ENCODE measurements at regions of chr7 and their contacts with region 1.

Region 1: GRCh38 chr7:101815835-101816493 is 1.5 kb upstream of the CUX1 start:
- DNase-seq: peak; percentile 71
- H3K4me3 Mint-ChIP-seq: peak overlapping the region; percentile 70
- H3K27ac Mint-ChIP-seq: peak overlapping the region; percentile 69
- H3K4me1 Mint-ChIP-seq: peaks cover 16% of the 10 kb centered on the region
- H3K27me3 Mint-ChIP-seq: no peaks in the 10 kb centered on the region

Region 2: DNA sequence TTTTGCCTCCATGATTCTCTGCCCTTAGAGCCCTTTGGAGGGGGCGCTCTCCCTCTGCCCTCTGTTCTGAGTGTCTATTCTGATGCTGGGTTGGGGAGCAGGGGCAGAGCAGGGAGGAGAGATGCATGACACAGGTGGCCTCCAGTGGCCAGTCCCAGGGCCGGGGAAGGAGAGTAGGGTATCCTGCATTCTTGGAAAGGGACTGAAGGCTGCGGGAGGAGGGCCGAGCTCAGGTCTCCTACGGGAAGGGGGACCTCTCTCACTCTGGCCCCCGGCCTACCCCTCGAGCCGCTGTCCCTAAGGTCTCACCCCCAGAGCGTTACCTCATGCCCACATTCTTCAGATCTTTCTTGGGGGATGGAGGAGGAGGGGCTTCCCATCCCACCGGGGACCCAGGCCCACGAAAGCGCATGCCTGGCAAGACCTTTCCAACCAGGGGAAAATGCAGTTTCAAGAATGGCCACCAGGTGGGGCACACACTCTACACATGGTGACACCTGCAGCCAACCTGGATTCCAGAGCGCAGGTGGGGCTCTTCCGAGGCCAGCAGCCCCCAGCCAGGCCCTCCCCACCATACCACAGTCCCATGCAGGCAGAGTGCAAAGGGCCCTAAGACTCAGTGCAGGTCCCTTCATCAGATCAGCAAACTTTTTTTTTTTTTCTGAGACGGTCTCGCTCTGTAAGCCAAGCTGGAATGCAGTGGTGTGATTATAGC is 273.3 kb before region 1 on chr7:
- CTCF ChIA-PET with region 1: no interaction called
- intact Hi-C with region 1: loop called (anchors 2 kb)
- DNase-seq: peak; percentile 89
- H3K4me3 Mint-ChIP-seq: no peak overlapping the region
- H3K27ac Mint-ChIP-seq: no peak overlapping the region
- H3K4me1 Mint-ChIP-seq: peaks cover 1% of the 10 kb centered on the region
- H3K27me3 Mint-ChIP-seq: no peaks in the 10 kb centered on the region

Region 3: DNA sequence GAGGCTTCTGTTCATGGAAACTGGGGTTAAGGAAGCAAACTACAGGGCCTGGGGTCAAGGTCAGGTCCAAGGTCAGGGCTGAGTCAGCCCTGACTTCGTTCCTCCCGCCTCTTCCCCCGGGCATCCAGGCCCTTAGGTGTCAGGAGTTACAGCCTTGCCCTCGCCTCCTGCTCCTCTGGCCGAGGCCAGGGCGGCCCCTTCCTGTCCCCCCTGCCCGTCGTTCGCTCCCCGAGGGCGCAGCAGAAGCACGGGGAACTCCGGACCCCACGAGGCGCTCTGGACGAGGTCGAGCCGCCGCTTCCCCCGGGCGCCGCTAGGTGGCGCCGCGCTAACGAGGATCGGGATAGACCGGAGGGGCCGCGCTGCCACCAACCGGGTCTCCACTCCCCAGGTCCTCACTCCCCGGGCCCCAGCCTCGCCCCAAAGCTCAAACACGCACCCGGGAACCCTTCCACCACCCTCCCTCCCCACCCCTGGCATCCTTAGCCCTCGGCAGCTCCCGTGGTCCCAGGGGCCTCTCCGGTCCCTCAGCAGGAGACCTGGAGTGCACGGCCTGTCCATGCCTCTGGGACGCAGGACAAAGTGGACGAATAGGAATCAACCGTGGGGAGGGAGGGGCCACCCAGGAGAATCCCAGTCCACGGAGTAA is 127.7 kb before region 1 on chr7:
- CTCF ChIA-PET with region 1: interaction called, 6 read pairs
- intact Hi-C with region 1: loop called (anchors 1 kb)
- DNase-seq: peak; percentile 84
- H3K4me3 Mint-ChIP-seq: no peak overlapping the region
- H3K27ac Mint-ChIP-seq: no peak overlapping the region
- H3K4me1 Mint-ChIP-seq: no peaks in the 10 kb centered on the region
- H3K27me3 Mint-ChIP-seq: no peaks in the 10 kb centered on the region

Region 4: DNA sequence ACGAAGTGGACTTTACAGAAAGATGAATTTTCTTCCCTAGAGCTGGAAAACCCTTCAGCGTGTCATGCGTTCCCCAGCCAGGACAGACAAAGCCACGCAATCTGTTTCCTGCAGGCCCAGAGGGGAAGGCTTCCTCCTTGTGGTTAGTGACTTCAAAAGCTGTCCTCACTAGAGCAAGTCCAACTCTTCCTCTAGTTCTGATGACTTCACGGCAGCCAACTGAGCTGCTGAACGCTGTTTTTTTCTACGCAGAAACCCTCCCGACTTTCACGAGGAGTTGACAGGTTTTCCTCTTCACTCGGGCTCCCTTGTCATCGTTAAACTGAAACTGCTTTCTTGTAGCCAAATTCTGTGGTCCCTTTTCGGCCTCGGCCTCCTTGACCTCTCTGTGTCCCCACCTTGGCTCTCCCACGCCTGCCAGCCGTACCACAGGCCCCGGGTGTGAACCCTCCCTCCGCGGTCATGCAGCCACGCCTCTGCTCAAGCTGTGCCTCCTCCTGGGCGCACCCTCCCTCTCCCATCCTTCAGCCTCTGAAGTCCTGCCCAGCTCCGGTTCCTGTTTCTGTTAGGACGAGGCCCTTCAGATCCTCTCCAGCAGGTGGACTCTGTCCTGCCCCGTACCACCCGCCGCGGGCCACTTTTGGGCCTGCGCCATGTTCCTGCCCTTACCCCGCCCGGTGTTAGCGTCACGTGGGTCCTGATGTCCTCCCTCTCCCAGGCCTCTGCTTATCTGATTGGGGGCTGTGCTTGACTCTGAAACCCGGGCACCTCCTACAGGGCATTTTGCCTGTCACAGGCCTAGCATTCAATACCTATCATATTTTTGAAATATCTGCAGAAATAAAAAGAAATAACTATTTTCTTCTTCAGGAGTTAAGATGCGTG is 40.8 kb after region 1 on chr7:
- CTCF ChIA-PET with region 1: interaction called, 5 read pairs
- intact Hi-C with region 1: loop called (anchors 1 kb)
- DNase-seq: peak; percentile 81
- H3K4me3 Mint-ChIP-seq: peak overlapping the region; percentile 83
- H3K27ac Mint-ChIP-seq: peak overlapping the region; percentile 82
- H3K4me1 Mint-ChIP-seq: peaks cover 39% of the 10 kb centered on the region
- H3K27me3 Mint-ChIP-seq: no peaks in the 10 kb centered on the region

Region 5: GRCh38 chr7:101900103-101900502 is 84.1 kb after region 1 on chr7:
- CTCF ChIA-PET with region 1: no interaction called
- intact Hi-C with region 1: no loop called
- DNase-seq: no peak
- H3K4me3 Mint-ChIP-seq: no peak overlapping the region
- H3K27ac Mint-ChIP-seq: no peak overlapping the region
- H3K4me1 Mint-ChIP-seq: peaks cover 5% of the 10 kb centered on the region
- H3K27me3 Mint-ChIP-seq: no peaks in the 10 kb centered on the region

Region 6: GRCh38 chr7:102169651-102170392 is 353.9 kb after region 1 on chr7:
- CTCF ChIA-PET with region 1: no interaction called
- intact Hi-C with region 1: no loop called
- DNase-seq: no peak
- H3K4me3 Mint-ChIP-seq: no peak overlapping the region
- H3K27ac Mint-ChIP-seq: no peak overlapping the region
- H3K4me1 Mint-ChIP-seq: no peaks in the 10 kb centered on the region
- H3K27me3 Mint-ChIP-seq: no peaks in the 10 kb centered on the region

Region 7: GRCh38 chr7:102236592-102237287 is 420.8 kb after region 1 on chr7:
- CTCF ChIA-PET with region 1: no interaction called
- intact Hi-C with region 1: loop called (anchors 2 kb)
- DNase-seq: peak; percentile 67
- H3K4me3 Mint-ChIP-seq: no peak overlapping the region
- H3K27ac Mint-ChIP-seq: no peak overlapping the region
- H3K4me1 Mint-ChIP-seq: no peaks in the 10 kb centered on the region
- H3K27me3 Mint-ChIP-seq: no peaks in the 10 kb centered on the region